ENCODE measurements at regions of chr11 and their contacts with region 1.

Region 1: DNA sequence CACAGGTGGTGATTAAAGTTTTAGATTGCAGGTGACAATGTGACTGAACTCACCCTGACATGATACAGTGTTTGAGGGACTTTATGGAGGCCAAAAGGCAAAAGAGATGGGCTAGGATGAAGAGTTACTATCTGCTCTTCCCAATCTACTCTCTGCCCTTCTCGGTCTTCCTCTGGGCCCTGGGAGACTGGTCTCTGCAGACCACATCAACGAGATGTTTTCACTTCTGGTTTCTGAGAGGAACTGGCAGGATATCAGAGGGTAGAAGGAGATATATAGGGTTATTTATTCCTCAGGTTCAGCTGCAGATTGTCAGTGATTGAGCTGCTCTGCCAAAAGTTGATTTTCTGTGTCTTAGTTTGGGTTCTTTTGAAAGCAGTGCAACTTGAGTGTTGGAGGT is 32.4 kb upstream of the CD44 start:
- DNase-seq: no peak
- ATAC-seq: peak; percentile 95
- H3K4me3 Mint-ChIP-seq: peak overlapping the region; percentile 72
- H3K27ac Mint-ChIP-seq: peak overlapping the region; percentile 83
- H3K4me1 Mint-ChIP-seq: peaks cover 71% of the 10 kb centered on the region
- H3K27me3 Mint-ChIP-seq: no peaks in the 10 kb centered on the region
- CTCF ChIP-seq: no peak

Region 2: DNA sequence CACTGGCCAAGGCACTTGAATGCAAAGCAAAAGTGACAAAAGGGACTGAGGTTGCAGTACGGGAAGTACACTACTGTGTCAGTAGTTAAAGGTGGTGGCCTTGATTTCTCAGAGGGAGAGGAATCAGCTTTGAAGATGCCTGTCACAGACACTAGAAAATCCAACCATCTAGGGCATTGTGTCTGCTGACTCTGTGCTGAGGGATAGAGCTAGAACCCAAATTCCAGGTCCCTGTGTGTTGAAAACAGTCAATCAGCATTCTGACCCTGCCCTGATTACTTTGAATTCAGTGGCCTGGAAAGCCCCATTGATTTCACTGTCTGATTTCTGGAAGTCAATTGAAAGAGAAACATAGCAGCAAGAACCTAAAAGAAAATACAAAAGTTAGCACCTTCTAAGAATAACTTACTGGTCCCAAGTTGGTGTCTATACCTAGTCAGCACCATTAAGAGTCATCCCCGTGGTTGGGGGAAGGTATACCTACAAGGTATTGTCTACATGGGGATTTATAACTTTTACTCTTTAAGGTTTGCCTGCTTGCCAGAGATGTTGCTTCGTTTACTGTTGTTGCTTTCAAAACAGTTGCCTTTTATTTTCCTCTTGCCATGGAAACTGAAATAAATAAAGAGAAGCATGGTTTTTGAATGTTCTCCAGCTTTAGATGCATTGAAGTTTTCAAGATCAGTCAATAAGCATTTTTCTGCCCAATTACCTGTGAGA is 92.9 kb before region 1 on chr11:
- CTCF ChIA-PET with region 1: no interaction called
- POLR2A ChIA-PET with region 1: interaction called, 12 read pairs
- intact Hi-C with region 1: no loop called
- DNase-seq: no peak
- ATAC-seq: peak; percentile 47
- H3K4me3 Mint-ChIP-seq: peak overlapping the region; percentile 59
- H3K27ac Mint-ChIP-seq: peak overlapping the region; percentile 90
- H3K4me1 Mint-ChIP-seq: peaks cover 43% of the 10 kb centered on the region
- H3K27me3 Mint-ChIP-seq: no peaks in the 10 kb centered on the region
- CTCF ChIP-seq: no peak

Region 3: DNA sequence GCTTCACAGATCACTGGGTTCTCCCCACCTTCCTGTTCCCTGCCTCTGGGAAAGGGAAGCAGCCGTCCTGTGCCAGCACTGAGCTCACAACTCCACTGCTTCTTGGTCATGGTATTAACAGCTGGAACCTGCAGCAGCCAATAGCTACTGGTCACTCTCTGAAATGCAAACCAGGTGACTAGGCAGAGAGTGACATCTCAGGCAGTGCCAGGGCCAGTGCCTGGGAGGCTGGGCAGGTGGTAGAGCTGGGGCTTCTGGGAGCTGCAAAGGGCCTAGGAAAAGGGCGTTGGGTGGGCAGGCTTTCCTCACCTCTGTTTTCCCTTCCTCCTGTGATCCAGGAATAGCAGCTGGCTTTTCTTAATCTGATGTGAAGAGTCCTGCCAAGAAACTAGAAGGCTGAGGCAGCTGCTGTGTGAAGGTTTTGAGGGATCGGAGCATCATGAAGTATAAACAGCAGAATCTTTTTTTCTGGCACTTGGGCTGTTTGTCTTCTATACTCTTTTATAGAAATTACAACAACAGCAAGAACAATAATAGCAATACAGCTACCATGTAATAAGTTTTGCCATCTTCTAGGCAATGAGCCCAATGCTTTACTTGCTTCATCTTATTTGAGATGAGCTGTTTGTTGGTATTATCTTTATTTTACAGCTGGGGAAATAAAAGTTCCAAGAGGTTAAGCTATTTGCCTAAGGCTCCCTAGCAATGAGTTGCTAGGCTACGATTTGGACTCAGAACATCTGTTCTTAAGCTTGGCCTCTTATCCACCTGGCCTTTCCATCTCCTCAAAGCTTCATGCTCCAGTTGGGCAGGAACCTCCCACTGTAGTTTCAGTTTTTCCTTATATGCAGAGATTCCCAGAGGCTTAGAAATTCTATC is 10.4 kb after region 1 on chr11:
- CTCF ChIA-PET with region 1: interaction called, 5 read pairs
- POLR2A ChIA-PET with region 1: interaction called, 14 read pairs
- intact Hi-C with region 1: loop called (anchors 1 kb)
- DNase-seq: no peak
- ATAC-seq: no peak
- H3K4me3 Mint-ChIP-seq: no peak overlapping the region
- H3K27ac Mint-ChIP-seq: peak overlapping the region; percentile 66
- H3K4me1 Mint-ChIP-seq: peaks cover 85% of the 10 kb centered on the region
- H3K27me3 Mint-ChIP-seq: no peaks in the 10 kb centered on the region
- CTCF ChIP-seq: no peak